Natural killer cell (primary cell): ENCODE measurements at regions of chr17 and their contacts with region 1.

Region 1: DNA sequence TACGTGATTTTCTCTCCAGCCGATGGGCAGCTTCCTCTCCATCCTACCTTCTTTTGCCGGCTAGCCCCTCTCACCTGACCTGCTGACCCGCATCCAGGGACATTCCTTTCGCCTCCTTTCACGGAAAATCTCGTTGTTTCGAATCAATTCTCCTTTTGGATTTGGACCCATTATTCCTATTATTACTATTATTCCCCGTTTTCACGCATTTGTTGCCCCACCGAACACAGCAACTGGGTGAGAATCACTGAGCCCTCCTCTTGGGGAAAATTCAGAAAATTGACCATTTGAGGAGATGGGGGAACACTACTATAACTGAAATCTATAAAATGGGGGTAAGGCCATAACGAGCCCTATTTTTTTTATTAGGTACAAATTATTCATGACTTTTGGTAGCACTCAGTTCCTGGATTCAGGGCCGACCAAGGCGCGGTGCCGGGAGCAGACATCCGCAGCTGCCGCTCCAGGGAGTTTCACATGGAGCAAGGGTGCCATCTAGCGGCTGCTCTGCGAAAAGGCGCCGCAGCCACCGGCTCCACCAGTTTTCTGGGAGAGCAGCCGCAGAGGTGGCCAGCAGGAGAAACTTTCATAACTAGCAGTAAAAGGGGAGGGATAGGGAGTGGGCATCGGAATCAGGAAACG is 3.3 kb upstream of the HOXB8 start:
- DNase-seq: peak; percentile 82 to 92
- ATAC-seq: peak; percentile 79 to 82 (median 81)
- H3K4me3 ChIP-seq: no peak overlapping the region
- H3K4me3 Mint-ChIP-seq: peak overlapping the region; percentile 45
- H3K27ac ChIP-seq: no peak overlapping the region
- H3K27ac Mint-ChIP-seq: peak overlapping the region in 1 of 2 donors; percentile 69
- H3K4me1 ChIP-seq: peaks cover 34% of the 10 kb centered on the region
- H3K4me1 Mint-ChIP-seq: peaks cover 28 to 43% of the 10 kb centered on the region in 2 donors
- H3K27me3 ChIP-seq: peaks cover 82% of the 10 kb centered on the region
- H3K27me3 Mint-ChIP-seq: peaks cover 79 to 95% of the 10 kb centered on the region in 2 donors
- CTCF ChIP-seq: peak; percentile 99

Region 2: GRCh38 chr17:48153691-48154358 is 464.6 kb before region 1 on chr17:
- intact Hi-C with region 1: loop called (anchors 5 kb)
- DNase-seq: peak in 1 of 2 donors; percentile 21
- ATAC-seq: peak in 1 of 3 donors; percentile 36
- H3K4me3 ChIP-seq: no peak overlapping the region
- H3K4me3 Mint-ChIP-seq: no peak overlapping the region
- H3K27ac ChIP-seq: no peak overlapping the region
- H3K27ac Mint-ChIP-seq: peak overlapping the region; percentile 34 to 36
- H3K4me1 ChIP-seq: no peaks in the 10 kb centered on the region
- H3K4me1 Mint-ChIP-seq: peaks cover 0 to 5% of the 10 kb centered on the region in 2 donors
- H3K27me3 ChIP-seq: no peaks in the 10 kb centered on the region
- H3K27me3 Mint-ChIP-seq: no peaks in the 10 kb centered on the region
- CTCF ChIP-seq: no peak

Region 3: GRCh38 chr17:48756830-48757251 is 138.5 kb after region 1 on chr17:
- intact Hi-C with region 1: loop called (anchors 10 kb)
- DNase-seq: no peak
- ATAC-seq: no peak
- H3K4me3 ChIP-seq: no peak overlapping the region
- H3K4me3 Mint-ChIP-seq: no peak overlapping the region
- H3K27ac ChIP-seq: no peak overlapping the region
- H3K27ac Mint-ChIP-seq: no peak overlapping the region
- H3K4me1 ChIP-seq: peaks cover 13% of the 10 kb centered on the region
- H3K4me1 Mint-ChIP-seq: peaks cover 0 to 3% of the 10 kb centered on the region in 2 donors
- H3K27me3 ChIP-seq: peaks cover 42% of the 10 kb centered on the region
- H3K27me3 Mint-ChIP-seq: peaks cover 55 to 75% of the 10 kb centered on the region in 2 donors
- CTCF ChIP-seq: no peak